GM12878 (cell line): ENCODE measurements at regions of chrX and their contacts with region 1.

Region 1: GRCh38 chrX:115147220-115147619 is 42.0 kb upstream of the RBMXL3 start:
- DNase-seq: no peak
- ATAC-seq: no peak
- H3K4me3 ChIP-seq: no peak overlapping the region
- H3K27ac ChIP-seq: no peak overlapping the region
- H3K4me1 ChIP-seq: no peaks in the 10 kb centered on the region
- H3K27me3 ChIP-seq: no peaks in the 10 kb centered on the region
- CTCF ChIP-seq: peak in 2 of 3 experiments; percentile 31 to 44; a peak in 4 of 6 replicates
- EP300 ChIP-seq: no peak
- POLR2A ChIP-seq: no peak
- RAD21 ChIP-seq: peak; percentile 40

Region 2: DNA sequence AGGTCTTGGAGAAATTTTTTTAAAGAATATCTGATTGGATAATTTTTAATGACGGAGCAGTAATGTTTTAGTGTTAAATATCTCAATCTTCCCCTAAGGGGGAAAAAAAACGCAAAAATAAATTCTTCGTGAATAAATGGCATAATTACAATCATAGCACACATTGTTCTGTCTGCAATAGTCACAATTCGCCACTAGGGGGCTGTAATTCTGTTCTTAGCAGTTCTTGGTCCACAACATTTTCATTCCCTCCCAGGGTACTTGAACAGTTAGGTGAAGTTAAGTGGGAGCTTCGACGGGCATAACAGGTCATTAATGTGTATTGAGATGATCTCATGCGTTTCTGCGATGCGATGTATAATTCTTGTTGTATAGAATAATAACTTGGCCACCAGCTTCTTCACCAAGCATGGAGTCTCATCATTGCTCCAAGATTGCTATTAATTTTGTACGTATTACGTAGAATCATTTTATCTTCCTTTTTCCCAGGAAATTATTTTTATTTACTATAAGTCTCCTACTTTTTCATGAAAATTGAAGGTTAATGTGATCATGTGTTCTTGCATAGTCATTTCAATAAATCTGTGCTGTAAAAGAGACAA is 536.1 kb before region 1 on chrX:
- CTCF ChIA-PET with region 1: interaction called, 3 read pairs
- POLR2A ChIA-PET with region 1: no interaction called
- RAD21 ChIA-PET with region 1: no interaction called
- SMC1A ChIA-PET with region 1: no interaction called
- in situ Hi-C with region 1: loop called (anchors 10 kb)
- intact Hi-C with region 1: loop called (anchors 5 kb)
- DNase-seq: no peak
- ATAC-seq: peak; percentile 81
- H3K4me3 ChIP-seq: no peak overlapping the region
- H3K27ac ChIP-seq: no peak overlapping the region
- H3K4me1 ChIP-seq: no peaks in the 10 kb centered on the region
- H3K27me3 ChIP-seq: no peaks in the 10 kb centered on the region
- CTCF ChIP-seq: peak; percentile 57 to 86 (median 78)
- EP300 ChIP-seq: no peak
- POLR2A ChIP-seq: no peak
- RAD21 ChIP-seq: peak; percentile 42

Region 3: DNA sequence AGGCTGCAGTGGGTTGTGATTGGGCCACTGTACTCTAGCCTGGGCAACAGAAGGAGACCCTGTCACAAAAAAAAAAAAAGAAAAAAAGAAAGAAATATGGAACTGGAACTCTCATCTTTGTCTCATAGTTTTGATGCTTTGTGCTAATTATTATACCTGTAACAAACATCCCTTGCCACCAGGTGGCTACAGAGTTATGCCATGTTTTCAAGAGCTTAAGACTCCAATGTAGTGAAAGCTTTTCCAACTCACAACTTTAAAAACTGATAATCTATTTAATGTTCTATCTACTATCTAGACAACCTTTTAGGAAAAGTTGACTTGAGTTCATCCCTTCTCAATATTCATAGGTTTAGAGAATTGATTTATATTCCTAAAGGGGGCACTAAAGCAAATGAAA is 520.9 kb before region 1 on chrX:
- CTCF ChIA-PET with region 1: interaction called, 11 read pairs
- POLR2A ChIA-PET with region 1: no interaction called
- RAD21 ChIA-PET with region 1: no interaction called
- SMC1A ChIA-PET with region 1: interaction called, 3 read pairs
- in situ Hi-C with region 1: no loop called
- intact Hi-C with region 1: loop called (anchors 5 kb)
- DNase-seq: no peak
- ATAC-seq: 0 out of 3 replicates have a peak, but pooled peaks have one; percentile 43
- H3K4me3 ChIP-seq: no peak overlapping the region
- H3K27ac ChIP-seq: no peak overlapping the region
- H3K4me1 ChIP-seq: no peaks in the 10 kb centered on the region
- H3K27me3 ChIP-seq: no peaks in the 10 kb centered on the region
- CTCF ChIP-seq: peak; percentile 28 to 42 (median 28); a peak in 4 of 6 replicates
- EP300 ChIP-seq: no peak
- POLR2A ChIP-seq: no peak
- RAD21 ChIP-seq: 0 out of 2 replicates have a peak, but pooled peaks have one; percentile 29

Region 4: DNA sequence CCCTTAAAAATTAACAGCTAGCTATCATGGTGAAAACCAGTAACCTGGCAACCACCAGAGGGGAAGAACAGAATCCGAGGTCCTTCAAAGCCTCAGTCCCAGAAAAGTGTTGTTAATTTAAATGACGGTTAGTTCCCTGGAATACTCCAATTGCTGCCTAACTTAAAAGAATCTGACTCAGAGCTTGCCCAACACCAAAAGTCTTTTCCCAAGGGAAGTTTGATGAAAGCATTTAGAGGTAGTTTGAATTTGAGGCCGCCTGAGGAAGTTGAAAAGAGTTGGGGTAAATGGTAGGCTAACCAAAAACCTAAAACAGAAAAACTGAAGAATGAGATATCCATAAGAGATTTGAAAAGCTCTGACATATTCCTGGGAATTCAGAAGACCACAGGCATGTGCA is 176.4 kb before region 1 on chrX:
- CTCF ChIA-PET with region 1: no interaction called
- POLR2A ChIA-PET with region 1: no interaction called
- RAD21 ChIA-PET with region 1: no interaction called
- SMC1A ChIA-PET with region 1: no interaction called
- in situ Hi-C with region 1: no loop called
- intact Hi-C with region 1: no loop called
- DNase-seq: no peak
- ATAC-seq: no peak
- H3K4me3 ChIP-seq: no peak overlapping the region
- H3K27ac ChIP-seq: no peak overlapping the region
- H3K4me1 ChIP-seq: no peaks in the 10 kb centered on the region
- H3K27me3 ChIP-seq: no peaks in the 10 kb centered on the region
- CTCF ChIP-seq: no peak
- EP300 ChIP-seq: no peak
- POLR2A ChIP-seq: no peak
- RAD21 ChIP-seq: no peak

Region 5: GRCh38 chrX:115189646-115190635 is 42.7 kb after region 1 on chrX:
- CTCF ChIA-PET with region 1: no interaction called
- POLR2A ChIA-PET with region 1: no interaction called
- RAD21 ChIA-PET with region 1: no interaction called
- SMC1A ChIA-PET with region 1: no interaction called
- in situ Hi-C with region 1: no loop called
- intact Hi-C with region 1: no loop called
- DNase-seq: no peak
- ATAC-seq: no peak
- H3K4me3 ChIP-seq: no peak overlapping the region
- H3K27ac ChIP-seq: no peak overlapping the region
- H3K4me1 ChIP-seq: no peaks in the 10 kb centered on the region
- H3K27me3 ChIP-seq: no peaks in the 10 kb centered on the region
- CTCF ChIP-seq: no peak
- EP300 ChIP-seq: no peak
- POLR2A ChIP-seq: no peak
- RAD21 ChIP-seq: no peak